Right ventricle myocardium inferior (tissue), 1 donor: ENCODE measurements at regions of chr15 and their contacts with region 1.

Region 1: DNA sequence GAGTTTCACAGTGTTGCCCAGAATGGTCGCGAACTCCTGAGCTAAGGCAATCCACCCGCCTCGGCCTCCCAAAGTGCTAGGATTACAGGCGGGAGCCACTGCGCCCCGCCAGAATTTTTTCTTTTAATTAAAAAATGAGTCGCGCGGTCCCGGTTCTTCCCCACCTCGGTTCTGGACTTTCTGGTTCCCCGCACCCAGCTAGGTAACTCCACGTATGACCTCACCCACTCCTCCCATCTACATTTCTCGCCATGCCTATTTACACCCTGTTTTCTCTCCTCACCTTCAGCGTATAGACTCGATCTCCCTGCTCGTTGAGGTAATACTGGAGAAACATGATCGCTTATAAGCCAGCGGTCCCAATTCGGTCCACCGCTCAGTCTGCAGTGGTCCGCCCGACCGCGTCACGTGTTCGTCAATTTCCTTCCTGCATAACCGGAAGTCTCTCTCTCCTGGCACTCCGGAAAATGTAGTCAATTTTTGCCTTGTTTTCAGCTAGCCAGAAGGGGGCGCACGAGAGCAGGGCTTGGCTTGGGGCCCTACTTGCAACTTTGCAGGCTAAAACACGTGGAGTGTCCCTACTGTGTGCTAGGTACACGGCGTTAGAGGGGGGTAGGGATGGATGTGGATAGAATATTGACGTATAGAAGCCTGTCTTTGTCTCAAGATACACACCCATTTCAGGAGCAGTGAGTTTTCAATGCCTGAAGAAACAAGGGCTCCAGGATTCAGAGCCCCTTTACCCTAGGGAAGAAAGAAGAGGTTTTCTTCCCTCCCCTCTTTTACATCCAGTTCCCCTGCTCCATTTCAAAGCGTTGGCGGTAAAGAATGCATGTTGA is at the starts of genes NOP10 and NUTM1:
- DNase-seq: peak; percentile 94
- ATAC-seq: peak; percentile 97
- total RNA-seq, gene NOP10: 157 TPM
- total RNA-seq, gene NUTM1: not detected

Region 2: GRCh38 chr15:34241372-34242330 is 101.3 kb before region 1 on chr15:
- intact Hi-C with region 1: loop called (anchors 2 kb)
- DNase-seq: no peak
- ATAC-seq: no peak

Region 3: GRCh38 chr15:34297059-34297458 is 45.9 kb before region 1 on chr15:
- intact Hi-C with region 1: no loop called
- DNase-seq: no peak
- ATAC-seq: no peak

Region 4: GRCh38 chr15:34331809-34332208 is 11.1 kb before region 1 on chr15:
- intact Hi-C with region 1: no loop called
- DNase-seq: no peak
- ATAC-seq: no peak

Region 5: GRCh38 chr15:34367101-34368081 is 24.4 kb after region 1 on chr15 and contains the start of gene LPCAT4:
- intact Hi-C with region 1: loop called (anchors 1 kb)
- DNase-seq: peak; percentile 96
- ATAC-seq: peak; percentile 96
- total RNA-seq, gene LPCAT4: 89.2 TPM